ENCODE measurements at regions of chr10 and their contacts with region 1.

Region 1: DNA sequence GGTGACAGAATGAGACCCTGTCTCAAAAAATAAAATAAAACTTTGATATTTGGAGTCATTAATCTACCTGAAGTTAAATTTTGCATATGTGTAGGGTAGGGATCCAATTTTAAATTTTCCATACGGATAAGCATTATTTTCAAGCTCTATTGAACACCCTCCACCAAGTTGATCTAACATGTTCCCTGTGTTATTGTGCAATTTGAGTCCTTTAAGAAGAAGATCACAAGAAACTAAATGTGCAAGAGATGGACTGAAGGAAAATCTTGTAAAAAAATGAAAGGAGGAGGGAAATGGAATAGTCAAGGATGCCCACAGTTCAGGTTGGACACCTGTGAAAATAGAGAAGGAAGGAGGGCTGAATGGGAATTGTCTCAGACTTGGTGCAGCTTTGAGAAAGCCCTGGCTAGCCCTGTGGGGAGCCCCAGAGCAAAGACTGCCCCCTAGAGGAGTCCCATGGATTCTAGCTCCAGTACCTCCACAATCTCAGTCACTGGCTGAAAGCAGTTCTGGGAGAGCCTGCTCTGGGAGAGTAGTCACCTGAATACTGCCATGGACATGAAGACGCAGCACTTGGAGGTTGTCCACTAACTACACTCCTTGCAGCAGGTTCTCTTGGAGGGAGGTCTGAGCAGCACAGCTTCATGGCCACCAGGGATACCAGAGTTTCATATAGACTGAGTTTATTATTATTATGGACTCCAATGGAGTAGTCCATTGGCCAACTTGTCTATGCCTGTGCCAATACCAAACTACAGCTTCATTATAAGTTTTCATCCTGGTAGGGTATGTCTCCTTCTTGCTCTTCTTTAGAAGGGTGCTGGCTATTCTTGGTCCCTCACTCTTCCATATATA is 5.7 kb upstream of the TIAL1 start:
- DNase-seq: peak; percentile 43
- CTCF ChIP-seq: peak; percentile 59

Region 2: DNA sequence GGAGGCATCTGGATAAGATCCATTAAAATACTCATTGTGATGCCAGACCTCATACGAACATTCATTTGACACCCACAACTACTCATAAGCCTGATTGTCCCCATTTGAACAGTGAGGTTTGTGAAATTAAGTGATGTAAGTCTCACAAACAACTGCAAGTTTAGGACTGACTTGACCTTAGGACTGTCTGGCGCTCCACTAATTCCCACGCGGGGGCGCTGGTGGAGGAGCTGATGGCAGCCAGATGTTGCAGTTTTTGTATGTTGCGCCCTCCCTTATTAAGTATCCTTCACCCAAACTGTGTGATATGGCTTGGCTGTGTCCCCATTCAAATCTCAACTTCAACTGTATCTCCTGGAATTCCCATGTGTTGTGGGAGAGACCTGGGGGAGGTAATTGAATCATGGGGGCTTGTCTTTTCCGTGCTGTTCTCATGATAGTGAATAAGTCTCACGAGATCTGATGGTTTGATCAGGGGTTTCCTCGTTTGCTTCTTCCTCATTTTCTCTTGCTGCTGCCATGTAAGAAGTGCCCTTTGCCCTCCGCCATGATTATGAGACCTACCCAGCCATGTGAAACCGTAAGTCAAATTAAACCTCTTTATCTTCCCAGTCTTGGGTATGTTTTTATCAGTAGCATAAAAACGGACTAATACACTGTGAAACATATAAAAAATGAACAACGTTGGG is 14.6 kb after region 1 on chr10:
- CTCF ChIA-PET with region 1: interaction called, 19 read pairs
- POLR2A ChIA-PET with region 1: no interaction called
- DNase-seq: no peak
- CTCF ChIP-seq: no peak

Region 3: GRCh38 chr10:119625570-119626280 is 23.3 kb after region 1 on chr10:
- CTCF ChIA-PET with region 1: interaction called, 11 read pairs
- POLR2A ChIA-PET with region 1: no interaction called
- DNase-seq: no peak
- CTCF ChIP-seq: no peak

Region 4: DNA sequence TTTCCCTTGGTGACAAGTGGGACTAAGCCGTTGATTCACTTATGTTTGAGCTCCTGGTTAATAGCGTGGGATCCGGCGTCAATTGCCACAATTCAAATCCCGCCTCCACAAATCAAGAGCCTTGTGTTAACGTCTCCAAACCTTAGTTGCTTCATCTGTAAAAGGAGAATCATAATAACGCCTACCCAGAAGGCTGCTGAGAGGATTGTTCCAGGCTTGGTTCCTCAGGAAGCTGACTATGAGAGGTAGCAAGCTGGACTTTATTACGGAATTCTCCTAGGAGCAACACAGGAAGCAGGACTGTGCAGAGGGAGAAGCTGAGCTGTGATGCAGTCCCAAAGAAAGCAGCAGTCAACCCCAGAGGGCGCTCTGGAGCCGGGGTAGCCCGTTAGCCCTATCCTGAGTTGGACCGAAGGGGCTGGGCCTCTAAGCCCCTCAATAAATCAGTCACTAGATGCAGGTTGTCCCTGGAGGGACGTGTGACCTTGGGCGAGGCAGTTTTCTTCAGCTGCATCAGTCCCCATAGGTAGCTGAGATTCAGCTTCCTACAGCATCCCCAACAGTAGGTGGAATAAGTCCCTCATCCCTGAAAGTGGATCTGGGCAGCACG is 41.8 kb after region 1 on chr10:
- CTCF ChIA-PET with region 1: interaction called, 14 read pairs
- POLR2A ChIA-PET with region 1: no interaction called
- DNase-seq: no peak
- CTCF ChIP-seq: no peak

Measured in GM10248 (cell line).